Ovary (tissue), 10 donors: ENCODE measurements at regions of chr4 and their contacts with region 1.

Region 1: DNA sequence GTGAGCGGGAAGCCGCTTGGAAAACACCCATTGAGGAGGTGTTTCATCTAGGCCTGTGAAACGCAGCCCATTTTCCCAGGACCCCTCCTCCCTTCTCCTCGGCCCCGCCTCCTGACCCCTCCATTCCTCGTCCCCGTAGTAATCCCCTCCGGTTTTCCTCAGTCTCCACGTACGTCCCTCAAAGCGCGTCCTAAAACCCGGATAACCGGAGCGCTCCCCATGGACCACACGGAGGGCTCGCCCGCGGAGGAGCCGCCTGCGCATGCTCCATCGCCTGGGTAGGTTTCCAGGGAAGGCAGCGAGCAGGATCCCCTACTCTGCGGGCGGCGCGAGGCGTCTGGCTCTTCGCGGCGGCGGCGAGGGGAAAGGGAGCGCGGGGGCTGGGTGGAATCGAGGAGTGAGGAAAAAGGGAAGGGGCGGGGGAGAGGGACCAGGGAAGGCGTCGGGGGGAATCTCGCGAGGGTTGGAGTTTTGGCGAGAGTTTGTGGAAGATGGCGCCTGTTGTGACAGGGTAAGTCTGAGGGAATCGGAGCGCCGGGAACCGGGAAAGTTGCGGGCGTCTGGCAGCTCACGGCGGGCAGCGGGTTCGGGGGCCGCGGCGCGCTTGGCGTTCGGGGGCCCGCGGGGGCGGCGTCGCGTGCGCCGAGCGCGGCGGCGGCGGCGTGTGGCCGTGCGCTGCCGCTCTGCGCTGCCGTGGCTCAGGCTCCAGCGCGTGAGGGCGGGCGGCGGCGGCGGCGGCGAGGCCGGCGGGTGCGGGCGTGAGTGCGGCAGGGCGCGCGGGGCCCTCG is at the start of gene RBPJ:
- DNase-seq: peak; percentile 90 to 95 (median 94)
- H3K4me3 ChIP-seq: peak within 1 kb of the TSS; percentile 59
- H3K27ac ChIP-seq: peak within 1 kb of the TSS; percentile 85 to 86
- H3K4me1 ChIP-seq: peaks cover 6% of the 10 kb centered on the region
- H3K27me3 ChIP-seq: no peaks in the 10 kb centered on the region
- CTCF ChIP-seq: peak in 1 of 3 donors; percentile 15
- EP300 ChIP-seq: no peak
- POLR2A ChIP-seq: peak; percentile 73
- total RNA-seq, gene RBPJ: 55.6 to 75.1 (median 68.5) TPM

Region 2: GRCh38 chr4:26028793-26029567 is 291.8 kb before region 1 on chr4:
- intact Hi-C with region 1: loop called in 1 of 4 experiments (anchors 5 kb)
- DNase-seq: peak; percentile 42 to 80 (median 72)
- H3K4me3 ChIP-seq: no peak overlapping the region
- H3K27ac ChIP-seq: no peak overlapping the region
- H3K4me1 ChIP-seq: peaks cover 6% of the 10 kb centered on the region
- H3K27me3 ChIP-seq: no peaks in the 10 kb centered on the region
- CTCF ChIP-seq: peak; percentile 36 to 42 (median 37)
- EP300 ChIP-seq: no peak
- POLR2A ChIP-seq: no peak

Region 3: DNA sequence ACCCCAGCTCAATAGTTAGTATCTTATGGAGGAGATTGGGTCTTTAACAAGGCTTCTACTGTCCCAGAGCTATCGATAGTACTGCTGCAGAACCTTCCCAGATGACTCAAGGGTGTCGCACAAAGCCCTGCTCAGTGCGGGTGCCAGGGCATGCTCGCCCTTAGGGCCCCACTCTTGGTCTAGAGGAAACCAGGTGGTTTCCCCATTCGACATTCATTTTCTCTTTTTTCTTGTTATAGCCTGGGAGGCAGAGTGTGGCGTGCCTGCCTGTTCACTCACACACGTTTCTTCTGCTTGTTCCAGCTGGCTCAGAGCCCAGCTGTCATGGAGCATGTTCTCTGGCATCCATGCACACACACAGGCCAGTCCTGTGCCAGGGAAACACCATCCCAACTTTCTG is 262.2 kb before region 1 on chr4:
- intact Hi-C with region 1: loop called in 1 of 4 experiments (anchors 10 kb)
- DNase-seq: no peak
- H3K4me3 ChIP-seq: no peak overlapping the region
- H3K27ac ChIP-seq: no peak overlapping the region
- H3K4me1 ChIP-seq: no peaks in the 10 kb centered on the region
- H3K27me3 ChIP-seq: no peaks in the 10 kb centered on the region
- CTCF ChIP-seq: no peak
- EP300 ChIP-seq: no peak
- POLR2A ChIP-seq: no peak

Region 4: GRCh38 chr4:26397086-26397485 is 76.4 kb after region 1 on chr4:
- intact Hi-C with region 1: loop called in 1 of 4 experiments (anchors 10 kb)
- DNase-seq: no peak
- H3K4me3 ChIP-seq: no peak overlapping the region
- H3K27ac ChIP-seq: no peak overlapping the region
- H3K4me1 ChIP-seq: peaks cover 3% of the 10 kb centered on the region
- H3K27me3 ChIP-seq: no peaks in the 10 kb centered on the region
- CTCF ChIP-seq: no peak
- EP300 ChIP-seq: no peak
- POLR2A ChIP-seq: no peak

Region 5: GRCh38 chr4:26410385-26411293 is 89.9 kb after region 1 on chr4:
- intact Hi-C with region 1: loop called in 1 of 4 experiments (anchors 10 kb)
- DNase-seq: peak in 1 of 5 donors; percentile 42
- H3K4me3 ChIP-seq: no peak overlapping the region
- H3K27ac ChIP-seq: no peak overlapping the region
- H3K4me1 ChIP-seq: peaks cover 7% of the 10 kb centered on the region
- H3K27me3 ChIP-seq: no peaks in the 10 kb centered on the region
- CTCF ChIP-seq: peak in 2 of 3 donors; percentile 57 to 62
- EP300 ChIP-seq: no peak
- POLR2A ChIP-seq: no peak